PC-9 (cell line): ENCODE measurements at regions of chr2 and their contacts with region 1.

Region 1: DNA sequence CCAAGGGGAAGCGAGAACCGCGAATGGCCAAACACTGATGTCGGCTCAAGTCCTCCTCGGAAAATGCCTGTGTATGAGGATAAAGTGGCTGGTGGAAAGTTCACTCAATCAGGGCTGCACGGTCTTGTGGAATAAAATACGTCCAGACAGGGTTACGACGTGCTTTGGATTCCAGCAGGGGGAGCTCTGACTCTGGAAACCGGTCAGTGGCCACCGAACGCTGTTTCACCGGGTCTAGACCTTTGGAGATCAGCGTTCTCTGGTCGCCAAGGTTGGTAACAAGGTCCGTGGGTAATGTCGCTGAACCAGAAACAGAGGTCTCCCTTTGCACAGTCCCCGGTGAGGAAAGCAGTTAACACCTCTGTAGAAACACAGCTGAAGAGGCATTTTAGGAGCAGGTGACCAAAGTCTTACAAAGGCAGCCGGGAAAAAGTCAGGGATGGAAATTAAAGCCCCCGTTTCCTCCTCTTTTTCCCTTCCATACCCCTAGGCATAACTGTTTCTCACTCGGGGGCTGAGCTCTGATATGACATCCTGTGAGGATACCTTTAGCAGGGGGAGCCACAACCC is 47.8 kb downstream of the CDCA7 start:
- DNase-seq: peak; percentile 79 to 88
- H3K4me3 ChIP-seq: peak overlapping the region; percentile 38; the same call in 1 of the 2 replicates
- H3K27ac ChIP-seq: no peak overlapping the region
- H3K4me1 ChIP-seq: peaks cover 11% of the 10 kb centered on the region; the same call in 1 of the 2 replicates
- H3K27me3 ChIP-seq: peaks cover 24% of the 10 kb centered on the region; the same call in 1 of the 2 replicates
- CTCF ChIP-seq: peak; percentile 99

Region 2: DNA sequence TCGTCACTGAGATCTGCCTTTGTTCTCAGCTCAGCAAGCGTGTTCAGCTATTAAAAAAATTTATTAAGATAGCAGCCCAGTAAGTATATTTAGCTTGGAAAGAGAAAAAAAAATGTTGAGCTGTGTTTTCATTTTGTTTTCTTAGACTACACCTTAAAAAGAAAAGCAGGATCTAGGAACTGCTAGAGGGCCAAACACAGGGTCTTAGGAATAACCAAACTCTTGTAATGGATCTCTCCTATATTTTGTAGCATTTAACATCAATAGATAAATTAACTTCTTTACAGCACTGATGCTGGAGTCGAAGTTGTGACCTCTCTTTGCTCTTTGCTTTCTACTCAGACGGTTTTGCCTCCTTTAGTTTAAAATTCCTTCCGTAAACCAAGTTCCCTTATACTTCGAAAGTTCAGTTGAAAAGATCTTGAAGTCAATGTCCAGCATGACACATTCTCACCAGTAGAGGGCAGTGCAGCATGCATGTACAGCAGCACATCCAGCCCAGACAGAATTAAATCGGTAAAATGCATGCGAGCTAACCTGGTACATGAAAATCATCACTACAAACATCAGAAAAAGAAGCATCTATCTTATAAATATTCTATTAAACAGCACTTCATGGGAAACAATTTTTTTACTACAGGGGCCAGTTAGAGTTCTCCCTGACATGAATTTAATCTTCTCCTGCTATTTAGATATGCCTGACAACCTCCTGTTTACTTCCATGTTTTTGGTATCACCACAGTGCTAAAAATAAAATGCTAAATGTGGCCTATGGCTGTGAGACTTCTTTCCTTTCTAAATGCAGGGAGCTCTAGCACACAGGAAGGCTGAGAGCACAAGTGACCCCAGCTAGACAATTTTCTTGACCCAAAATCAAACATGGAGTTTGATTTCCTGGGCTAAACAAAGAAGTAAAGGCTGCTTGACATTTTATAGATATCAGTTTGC is 375.0 kb before region 1 on chr2:
- CTCF ChIA-PET with region 1: interaction called, 4 read pairs
- POLR2A ChIA-PET with region 1: no interaction called
- intact Hi-C with region 1: loop called (anchors 2 kb)
- DNase-seq: peak; percentile 73 to 84
- H3K4me3 ChIP-seq: no peak overlapping the region
- H3K27ac ChIP-seq: no peak overlapping the region
- H3K4me1 ChIP-seq: no peaks in the 10 kb centered on the region
- H3K27me3 ChIP-seq: no peaks in the 10 kb centered on the region
- CTCF ChIP-seq: peak; percentile 100

Region 3: DNA sequence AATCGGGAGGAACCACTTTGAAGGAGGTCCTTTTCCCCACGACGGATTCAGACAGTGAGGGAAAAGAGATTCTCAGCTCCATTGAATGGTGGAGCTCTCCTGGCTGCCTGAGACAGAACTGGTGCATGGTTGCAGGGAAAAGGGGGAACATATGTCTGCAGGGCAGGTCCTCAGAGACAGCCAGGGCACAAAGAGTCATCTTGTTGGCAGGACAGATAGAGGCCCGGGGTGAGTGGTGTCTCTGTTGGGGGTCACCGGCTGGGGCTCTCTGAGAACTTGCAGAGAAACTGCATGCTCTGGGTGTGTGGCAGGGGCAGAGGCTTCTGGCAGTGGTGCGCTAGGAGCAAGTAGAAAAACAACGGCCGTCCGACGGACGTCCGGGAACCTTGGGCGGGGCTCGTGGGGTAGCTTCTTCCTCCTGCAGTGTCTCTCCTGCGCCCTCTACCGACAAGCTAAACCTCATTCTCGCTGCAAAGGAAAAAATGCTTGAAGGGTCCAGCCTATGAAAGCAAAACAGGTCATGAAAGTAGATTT is 46.5 kb after region 1 on chr2:
- CTCF ChIA-PET with region 1: interaction called, 6 read pairs
- POLR2A ChIA-PET with region 1: no interaction called
- intact Hi-C with region 1: loop called (anchors 1 kb)
- DNase-seq: peak; percentile 75 to 87
- H3K4me3 ChIP-seq: peak overlapping the region; percentile 47; the same call in 1 of the 2 replicates
- H3K27ac ChIP-seq: no peak overlapping the region
- H3K4me1 ChIP-seq: 0 out of 2 replicates have a peak, but pooled peaks cover 5% of the 10 kb centered on the region
- H3K27me3 ChIP-seq: peaks cover 12% of the 10 kb centered on the region; the same call in 1 of the 2 replicates
- CTCF ChIP-seq: peak; percentile 97

Region 4: GRCh38 chr2:173667417-173667816 is 264.9 kb after region 1 on chr2:
- CTCF ChIA-PET with region 1: no interaction called
- POLR2A ChIA-PET with region 1: no interaction called
- intact Hi-C with region 1: loop called (anchors 1 kb)
- DNase-seq: no peak
- H3K4me3 ChIP-seq: no peak overlapping the region
- H3K27ac ChIP-seq: no peak overlapping the region
- H3K4me1 ChIP-seq: peaks cover 6% of the 10 kb centered on the region; the same call in 1 of the 2 replicates
- H3K27me3 ChIP-seq: peaks cover 4% of the 10 kb centered on the region; the same call in 1 of the 2 replicates
- CTCF ChIP-seq: peak; percentile 26; the same call in 1 of the 2 replicates

Region 5: GRCh38 chr2:174012347-174013314 is 610.1 kb after region 1 on chr2:
- CTCF ChIA-PET with region 1: no interaction called
- POLR2A ChIA-PET with region 1: interaction called, 18 read pairs
- intact Hi-C with region 1: no loop called
- DNase-seq: peak in 1 of 2 experiments; percentile 81
- H3K4me3 ChIP-seq: no peak overlapping the region
- H3K27ac ChIP-seq: no peak overlapping the region
- H3K4me1 ChIP-seq: no peaks in the 10 kb centered on the region
- H3K27me3 ChIP-seq: no peaks in the 10 kb centered on the region
- CTCF ChIP-seq: no peak

Region 6: GRCh38 chr2:174546581-174547506 is 1144.4 kb after region 1 on chr2:
- CTCF ChIA-PET with region 1: interaction called, 3 read pairs
- POLR2A ChIA-PET with region 1: interaction called, 3 read pairs
- intact Hi-C with region 1: loop called (anchors 10 kb)
- DNase-seq: peak; percentile 74 to 79
- H3K4me3 ChIP-seq: peak overlapping the region; percentile 58
- H3K27ac ChIP-seq: no peak overlapping the region
- H3K4me1 ChIP-seq: 0 out of 2 replicates have a peak, but pooled peaks cover 4% of the 10 kb centered on the region
- H3K27me3 ChIP-seq: 0 out of 2 replicates have a peak, but pooled peaks cover 5% of the 10 kb centered on the region
- CTCF ChIP-seq: peak; percentile 80